Endothelial cell of umbilical vein (primary cell): ENCODE measurements at regions of chr2 and their contacts with region 1.

Region 1: DNA sequence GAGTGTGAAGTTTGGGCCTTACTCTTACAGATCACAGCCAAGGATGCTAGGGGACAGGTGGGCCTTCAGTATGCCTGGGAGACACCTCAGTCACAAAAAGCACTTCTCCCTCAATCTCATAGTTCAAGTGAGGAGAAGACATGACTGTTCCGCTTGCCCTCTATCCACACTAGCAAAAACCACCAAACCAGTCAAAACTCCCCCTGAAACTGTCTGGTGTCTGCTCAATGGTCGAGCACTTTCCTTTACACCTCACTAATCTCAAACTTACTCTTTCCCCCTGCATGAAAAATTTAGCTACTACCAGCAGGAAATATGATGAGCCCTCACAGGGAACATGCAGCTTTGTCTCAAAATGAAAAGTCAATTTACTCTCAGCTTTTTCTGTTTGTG is 232.2 kb downstream of the TRIB2 start:
- DNase-seq: no peak
- H3K4me3 ChIP-seq: no peak overlapping the region
- H3K27ac ChIP-seq: no peak overlapping the region
- H3K4me1 ChIP-seq: peaks cover 17% of the 10 kb centered on the region
- H3K27me3 ChIP-seq: no peaks in the 10 kb centered on the region
- CTCF ChIP-seq: no peak
- POLR2A ChIP-seq: no peak

Region 2: GRCh38 chr2:12176623-12177454 is 772.1 kb before region 1 on chr2:
- CTCF ChIA-PET with region 1: no interaction called
- POLR2A ChIA-PET with region 1: no interaction called
- dilution Hi-C with region 1: no loop called
- intact Hi-C with region 1: loop called (anchors 10 kb)
- DNase-seq: peak; percentile 49
- H3K4me3 ChIP-seq: no peak overlapping the region
- H3K27ac ChIP-seq: peak overlapping the region; percentile 12
- H3K4me1 ChIP-seq: peaks cover 20% of the 10 kb centered on the region
- H3K27me3 ChIP-seq: no peaks in the 10 kb centered on the region
- CTCF ChIP-seq: no peak
- POLR2A ChIP-seq: no peak

Region 3: GRCh38 chr2:12686708-12687283 is 262.2 kb before region 1 on chr2:
- CTCF ChIA-PET with region 1: no interaction called
- POLR2A ChIA-PET with region 1: no interaction called
- dilution Hi-C with region 1: no loop called
- intact Hi-C with region 1: no loop called
- DNase-seq: no peak
- H3K4me3 ChIP-seq: no peak overlapping the region
- H3K27ac ChIP-seq: no peak overlapping the region
- H3K4me1 ChIP-seq: no peaks in the 10 kb centered on the region
- H3K27me3 ChIP-seq: peaks cover 4 to 5% of the 10 kb centered on the region in 2 experiments
- CTCF ChIP-seq: no peak
- POLR2A ChIP-seq: no peak

Region 4: GRCh38 chr2:12737738-12738485 is 211.0 kb before region 1 on chr2:
- CTCF ChIA-PET with region 1: no interaction called
- POLR2A ChIA-PET with region 1: no interaction called
- dilution Hi-C with region 1: no loop called
- intact Hi-C with region 1: no loop called
- DNase-seq: peak; percentile 9
- H3K4me3 ChIP-seq: no peak overlapping the region
- H3K27ac ChIP-seq: no peak overlapping the region
- H3K4me1 ChIP-seq: peaks cover 5% of the 10 kb centered on the region
- H3K27me3 ChIP-seq: no peaks in the 10 kb centered on the region
- CTCF ChIP-seq: no peak
- POLR2A ChIP-seq: no peak

Region 5: DNA sequence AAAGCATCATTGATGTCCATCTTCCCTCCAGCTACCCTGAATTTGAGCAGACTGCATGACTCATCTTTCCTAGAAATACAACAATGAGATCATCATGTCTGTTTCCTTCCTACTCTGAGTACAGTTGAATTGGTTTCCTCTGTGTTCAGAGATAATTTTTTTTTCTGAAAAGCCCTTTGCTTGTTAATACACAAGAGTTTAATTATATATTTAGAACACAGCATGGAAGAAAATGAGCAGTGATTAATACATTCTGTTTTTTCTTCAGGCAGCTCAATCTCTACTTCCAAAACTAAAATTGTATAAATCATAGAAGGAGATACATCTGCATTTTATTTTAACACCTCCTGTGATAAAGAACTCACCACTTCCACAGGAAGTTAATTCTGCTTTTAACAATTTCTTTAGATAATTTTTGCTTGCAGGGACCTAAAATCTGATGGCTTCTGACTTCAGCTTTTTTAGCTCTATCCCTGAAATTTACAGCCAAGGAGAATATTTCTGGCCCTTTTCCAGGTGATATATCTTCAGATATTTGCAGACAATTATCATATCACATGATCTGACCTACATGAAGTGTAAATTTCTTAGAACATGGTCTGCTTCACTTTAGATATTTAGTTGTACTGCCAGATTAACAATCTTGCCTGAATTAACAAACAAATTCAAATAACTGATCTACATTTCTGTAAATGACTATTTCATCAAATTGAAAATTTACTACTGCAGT is 16.7 kb after region 1 on chr2:
- CTCF ChIA-PET with region 1: interaction called, 5 read pairs
- POLR2A ChIA-PET with region 1: no interaction called
- dilution Hi-C with region 1: no loop called
- intact Hi-C with region 1: loop called (anchors 1 kb)
- DNase-seq: peak; percentile 84
- H3K4me3 ChIP-seq: peak overlapping the region in 1 of 3 experiments; percentile 30
- H3K27ac ChIP-seq: peak overlapping the region; percentile 67
- H3K4me1 ChIP-seq: peaks cover 17% of the 10 kb centered on the region
- H3K27me3 ChIP-seq: no peaks in the 10 kb centered on the region
- CTCF ChIP-seq: no peak
- POLR2A ChIP-seq: peak; percentile 43

Region 6: GRCh38 chr2:12982149-12982584 is 33.2 kb after region 1 on chr2:
- CTCF ChIA-PET with region 1: no interaction called
- POLR2A ChIA-PET with region 1: no interaction called
- dilution Hi-C with region 1: no loop called
- intact Hi-C with region 1: loop called (anchors 2 kb)
- DNase-seq: peak; percentile 90
- H3K4me3 ChIP-seq: no peak overlapping the region
- H3K27ac ChIP-seq: peak overlapping the region; percentile 50
- H3K4me1 ChIP-seq: peaks cover 28% of the 10 kb centered on the region
- H3K27me3 ChIP-seq: no peaks in the 10 kb centered on the region
- CTCF ChIP-seq: no peak
- POLR2A ChIP-seq: no peak